ENCODE measurements at regions of chr17 and their contacts with region 1.

Region 1: GRCh38 chr17:50707289-50708049 is at the start of gene ANKRD40:
- DNase-seq: peak; percentile 96
- H3K4me3 ChIP-seq: peak within 1 kb of the TSS; percentile 66
- H3K27ac ChIP-seq: peak within 1 kb of the TSS; percentile 87
- H3K4me1 ChIP-seq: peaks cover 6% of the 10 kb centered on the region
- H3K27me3 ChIP-seq: no peaks in the 10 kb centered on the region
- CTCF ChIP-seq: no peak
- total RNA-seq, gene ANKRD40: 54.2 and 61.3 TPM in 2 replicates

Region 2: DNA sequence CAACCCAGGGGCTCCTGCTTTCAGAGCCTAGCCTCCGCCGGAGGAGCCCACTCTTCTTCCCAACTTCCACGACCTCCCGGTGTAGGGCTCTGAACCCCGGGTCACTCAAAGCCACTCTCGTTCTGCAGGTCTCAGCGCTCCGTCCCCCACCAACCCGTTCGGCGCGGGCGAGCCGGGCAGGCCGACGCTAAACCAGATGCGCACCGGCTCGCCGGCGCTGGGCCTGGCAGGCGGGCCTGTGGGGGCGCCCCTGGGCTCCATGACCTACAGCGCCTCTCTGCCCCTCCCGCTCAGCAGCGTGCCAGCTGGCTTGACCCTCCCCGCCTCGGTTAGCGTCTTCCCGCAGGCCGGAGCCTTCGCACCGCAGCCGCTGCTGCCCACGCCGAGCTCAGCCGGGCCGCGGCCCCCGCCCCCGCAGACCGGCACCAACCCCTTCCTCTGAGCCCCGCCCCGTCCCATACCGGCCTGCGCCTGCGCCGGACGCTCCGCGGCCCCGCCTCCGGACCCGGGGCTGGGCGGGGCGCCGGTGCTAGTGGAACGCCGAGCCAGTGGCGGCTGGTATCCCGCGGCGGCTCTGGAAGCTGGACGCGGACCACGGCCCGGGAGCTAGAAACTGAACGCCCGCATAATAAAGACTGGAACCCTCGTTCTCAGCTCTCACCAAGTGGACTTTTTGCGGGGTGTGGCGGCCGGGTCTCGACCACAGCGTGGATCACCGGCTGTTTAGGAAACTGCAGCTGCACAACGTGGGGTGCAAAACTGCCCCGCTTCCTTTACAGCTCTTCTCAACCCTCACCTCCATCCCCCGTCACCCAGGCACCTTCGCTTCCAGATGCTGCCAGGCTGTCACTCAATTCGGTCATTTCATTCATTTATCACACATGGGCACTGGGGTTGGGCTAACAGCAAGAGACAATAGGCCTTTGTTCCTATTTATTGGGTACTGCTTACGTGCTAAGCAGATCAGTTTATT is 165.5 kb before region 1 on chr17:
- CTCF ChIA-PET with region 1: interaction called, 10 read pairs
- POLR2A ChIA-PET with region 1: no interaction called
- intact Hi-C with region 1: no loop called
- DNase-seq: peak; percentile 88
- H3K4me3 ChIP-seq: peak overlapping the region; percentile 58
- H3K27ac ChIP-seq: peak overlapping the region; percentile 56
- H3K4me1 ChIP-seq: peaks cover 15% of the 10 kb centered on the region
- H3K27me3 ChIP-seq: no peaks in the 10 kb centered on the region
- CTCF ChIP-seq: peak; percentile 39; the same call in 1 of the 2 replicates

Region 3: DNA sequence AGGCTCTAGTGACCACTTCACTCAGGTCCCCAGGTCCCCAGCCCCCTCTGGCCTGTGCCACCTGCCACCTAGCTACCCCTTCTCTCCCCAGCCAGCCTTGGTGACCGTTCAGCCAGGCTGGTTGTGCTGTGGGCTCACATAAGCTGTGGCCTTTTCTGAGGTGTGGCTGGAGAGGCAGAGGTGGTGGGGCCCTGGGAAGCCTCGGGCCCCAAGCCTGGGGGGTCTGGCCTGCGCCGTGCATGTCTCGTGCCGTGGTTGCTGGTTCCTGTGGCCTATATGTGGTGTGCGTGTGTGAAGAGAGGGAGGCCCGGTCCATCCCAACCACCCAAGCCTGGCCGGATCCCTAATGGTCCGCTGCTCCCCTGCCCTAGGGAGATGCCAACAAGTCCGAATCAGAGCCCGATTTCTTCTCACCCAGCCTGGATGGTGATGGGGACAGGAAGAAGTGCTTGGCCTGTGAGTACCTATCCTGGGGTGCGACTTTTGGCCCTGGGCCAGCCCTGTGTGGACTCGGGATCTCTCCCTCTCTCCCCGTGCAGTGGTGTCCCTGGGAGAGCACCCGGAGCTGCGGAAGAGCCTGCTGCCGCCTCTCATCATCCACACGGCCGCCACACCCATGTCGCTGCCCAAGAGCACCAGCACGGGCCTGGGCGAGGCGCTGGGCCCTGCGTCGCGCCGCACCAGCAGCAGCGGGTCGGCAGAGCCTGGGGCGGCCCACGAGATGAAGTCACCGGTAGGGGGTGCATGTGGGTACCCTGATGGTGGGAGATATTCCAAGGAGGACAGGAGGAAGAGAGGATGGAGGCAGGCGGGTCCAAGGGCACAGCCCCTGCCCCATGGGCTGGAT is 111.1 kb before region 1 on chr17:
- CTCF ChIA-PET with region 1: no interaction called
- POLR2A ChIA-PET with region 1: no interaction called
- intact Hi-C with region 1: no loop called
- DNase-seq: no peak
- H3K4me3 ChIP-seq: no peak overlapping the region
- H3K27ac ChIP-seq: no peak overlapping the region
- H3K4me1 ChIP-seq: no peaks in the 10 kb centered on the region
- H3K27me3 ChIP-seq: no peaks in the 10 kb centered on the region
- CTCF ChIP-seq: 0 out of 2 replicates have a peak, but pooled peaks have one; percentile 19

Measured in A673 (cell line).